SK-N-SH (cell line): ENCODE measurements at regions of chr18 and their contacts with region 1.

Region 1: GRCh38 chr18:70454704-70455322 is 166.0 kb downstream of the SOCS6 start:
- DNase-seq: peak; percentile 55
- H3K4me3 ChIP-seq: no peak overlapping the region; a peak in 1 of 4 replicates
- H3K27ac ChIP-seq: no peak overlapping the region
- H3K4me1 ChIP-seq: no peaks in the 10 kb centered on the region; a peak in 1 of 4 replicates
- H3K27me3 ChIP-seq: no peaks in the 10 kb centered on the region
- CTCF ChIP-seq: peak; percentile 96
- EP300 ChIP-seq: no peak
- RAD21 ChIP-seq: peak; percentile 77

Region 2: DNA sequence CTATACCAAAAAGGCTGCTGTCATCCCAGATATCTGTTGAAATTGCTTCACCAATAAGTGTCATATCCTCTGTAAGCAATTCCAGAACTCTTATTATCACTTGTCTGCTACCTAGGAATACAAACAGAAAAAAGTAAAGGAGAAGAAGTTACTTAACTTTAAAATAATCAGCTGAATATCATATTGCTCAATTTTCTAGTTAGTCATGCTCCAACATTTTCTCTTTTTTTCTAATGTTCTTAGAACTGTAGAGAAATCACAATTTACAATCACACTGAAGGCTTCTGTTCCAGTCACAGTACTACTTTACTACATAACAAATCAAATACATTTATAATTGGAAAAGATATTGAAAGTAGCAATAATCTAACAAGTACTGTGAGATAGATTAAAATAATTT is 266.7 kb before region 1 on chr18:
- CTCF ChIA-PET with region 1: interaction called, 10 read pairs
- POLR2A ChIA-PET with region 1: no interaction called
- DNase-seq: no peak
- H3K4me3 ChIP-seq: no peak overlapping the region
- H3K27ac ChIP-seq: no peak overlapping the region
- H3K4me1 ChIP-seq: no peaks in the 10 kb centered on the region
- H3K27me3 ChIP-seq: no peaks in the 10 kb centered on the region
- CTCF ChIP-seq: no peak
- EP300 ChIP-seq: no peak
- RAD21 ChIP-seq: no peak

Region 3: DNA sequence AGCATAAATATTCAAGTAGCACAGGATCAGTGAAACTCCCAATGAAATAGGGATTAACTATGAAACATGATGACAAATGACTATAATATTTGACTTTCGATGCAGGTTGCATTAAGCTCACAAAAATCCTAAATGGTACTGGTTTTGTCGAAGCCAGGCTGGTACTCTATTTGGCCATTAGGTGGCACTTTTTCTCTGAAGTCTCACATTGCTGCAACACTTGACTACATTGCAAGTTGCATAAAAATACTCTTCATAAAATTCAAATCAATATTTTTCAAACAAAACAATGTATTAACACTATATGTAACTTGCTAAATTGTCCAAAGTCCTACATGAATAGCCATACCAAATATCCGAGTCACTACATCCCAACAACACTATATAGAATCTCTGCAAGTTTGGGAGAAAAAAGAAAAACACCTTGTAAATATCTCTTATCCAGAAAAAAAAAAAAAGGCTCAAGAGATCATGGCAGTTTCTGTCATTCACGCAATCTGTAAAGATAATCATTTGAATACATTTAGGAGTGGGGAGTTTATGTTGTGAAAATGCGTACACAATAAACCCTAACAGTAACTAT is 258.9 kb before region 1 on chr18:
- CTCF ChIA-PET with region 1: interaction called, 108 read pairs
- POLR2A ChIA-PET with region 1: no interaction called
- DNase-seq: peak; percentile 54
- H3K4me3 ChIP-seq: no peak overlapping the region
- H3K27ac ChIP-seq: no peak overlapping the region
- H3K4me1 ChIP-seq: no peaks in the 10 kb centered on the region
- H3K27me3 ChIP-seq: no peaks in the 10 kb centered on the region
- CTCF ChIP-seq: peak; percentile 96
- EP300 ChIP-seq: no peak
- RAD21 ChIP-seq: peak; percentile 91

Region 4: GRCh38 chr18:70384181-70384790 is 70.5 kb before region 1 on chr18:
- CTCF ChIA-PET with region 1: no interaction called
- POLR2A ChIA-PET with region 1: no interaction called
- DNase-seq: no peak
- H3K4me3 ChIP-seq: peak overlapping the region in 1 of 2 experiments; percentile 38; a peak in 2 of 4 replicates
- H3K27ac ChIP-seq: peak overlapping the region in 1 of 2 experiments; percentile 82; a peak in 2 of 4 replicates
- H3K4me1 ChIP-seq: peaks cover 0 to 20% of the 10 kb centered on the region in 2 experiments; a peak in 2 of 4 replicates
- H3K27me3 ChIP-seq: no peaks in the 10 kb centered on the region
- CTCF ChIP-seq: no peak
- EP300 ChIP-seq: peak in 1 of 2 experiments; percentile 92; a peak in 2 of 4 replicates
- RAD21 ChIP-seq: no peak

Region 5: DNA sequence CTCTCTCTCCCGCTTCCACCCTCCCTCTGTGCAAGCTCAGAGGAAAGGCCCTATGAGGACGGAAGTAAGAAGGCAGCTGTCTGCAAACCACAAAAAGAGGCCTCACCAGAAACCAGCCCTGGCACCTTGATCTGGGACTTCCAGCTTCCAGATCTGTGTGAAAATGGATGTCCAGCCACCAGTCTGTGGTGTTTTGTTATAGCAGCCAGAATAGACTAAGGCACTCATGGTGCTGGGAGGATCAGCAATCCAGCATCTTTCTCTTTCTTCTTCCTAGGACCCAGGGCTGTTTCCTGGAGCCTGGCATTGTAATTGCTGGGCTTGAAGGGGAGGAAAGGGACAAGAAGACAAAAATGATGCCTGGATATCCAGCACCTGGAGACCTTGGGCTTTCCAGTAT is 43.5 kb before region 1 on chr18:
- CTCF ChIA-PET with region 1: no interaction called
- POLR2A ChIA-PET with region 1: no interaction called
- DNase-seq: no peak
- H3K4me3 ChIP-seq: no peak overlapping the region
- H3K27ac ChIP-seq: no peak overlapping the region; a peak in 1 of 4 replicates
- H3K4me1 ChIP-seq: peaks cover 0 to 12% of the 10 kb centered on the region in 2 experiments; a peak in 2 of 4 replicates
- H3K27me3 ChIP-seq: no peaks in the 10 kb centered on the region
- CTCF ChIP-seq: no peak
- EP300 ChIP-seq: no peak
- RAD21 ChIP-seq: no peak

Region 6: GRCh38 chr18:70442933-70443332 is 11.9 kb before region 1 on chr18:
- CTCF ChIA-PET with region 1: interaction called, 14 read pairs
- POLR2A ChIA-PET with region 1: no interaction called
- DNase-seq: no peak
- H3K4me3 ChIP-seq: no peak overlapping the region
- H3K27ac ChIP-seq: no peak overlapping the region
- H3K4me1 ChIP-seq: no peaks in the 10 kb centered on the region; a peak in 1 of 4 replicates
- H3K27me3 ChIP-seq: no peaks in the 10 kb centered on the region
- CTCF ChIP-seq: no peak
- EP300 ChIP-seq: no peak
- RAD21 ChIP-seq: no peak

Region 7: GRCh38 chr18:70491734-70492348 is 37.0 kb after region 1 on chr18:
- CTCF ChIA-PET with region 1: interaction called, 26 read pairs
- POLR2A ChIA-PET with region 1: no interaction called
- DNase-seq: peak; percentile 55
- H3K4me3 ChIP-seq: no peak overlapping the region; a peak in 1 of 4 replicates
- H3K27ac ChIP-seq: no peak overlapping the region
- H3K4me1 ChIP-seq: peaks cover 6 to 14% of the 10 kb centered on the region in 2 experiments; a peak in 3 of 4 replicates
- H3K27me3 ChIP-seq: no peaks in the 10 kb centered on the region
- CTCF ChIP-seq: peak; percentile 89
- EP300 ChIP-seq: no peak
- RAD21 ChIP-seq: peak; percentile 72